Activated T-helper 2 cell treated with anti-CD3 and anti-CD28 coated beads, Interferon-gamma antibody, Interleukin-2, Interleukin-4, amounts not matched to agents 10 μg/mL and 5 μg/mL and 100 μg/mL, durations not matched to agents 14 hours and 24 hours and 36 hours (primary cell): ENCODE measurements at regions of chr9 and their contacts with region 1.

Region 1: GRCh38 chr9:6008169-6008979 is 7.0 kb downstream of the RANBP6 start:
- DNase-seq: peak; percentile 92
- H3K4me3 Mint-ChIP-seq: peak overlapping the region; percentile 74
- H3K27ac Mint-ChIP-seq: peak overlapping the region; percentile 84
- H3K4me1 Mint-ChIP-seq: peaks cover 53% of the 10 kb centered on the region
- H3K27me3 Mint-ChIP-seq: no peaks in the 10 kb centered on the region

Region 2: DNA sequence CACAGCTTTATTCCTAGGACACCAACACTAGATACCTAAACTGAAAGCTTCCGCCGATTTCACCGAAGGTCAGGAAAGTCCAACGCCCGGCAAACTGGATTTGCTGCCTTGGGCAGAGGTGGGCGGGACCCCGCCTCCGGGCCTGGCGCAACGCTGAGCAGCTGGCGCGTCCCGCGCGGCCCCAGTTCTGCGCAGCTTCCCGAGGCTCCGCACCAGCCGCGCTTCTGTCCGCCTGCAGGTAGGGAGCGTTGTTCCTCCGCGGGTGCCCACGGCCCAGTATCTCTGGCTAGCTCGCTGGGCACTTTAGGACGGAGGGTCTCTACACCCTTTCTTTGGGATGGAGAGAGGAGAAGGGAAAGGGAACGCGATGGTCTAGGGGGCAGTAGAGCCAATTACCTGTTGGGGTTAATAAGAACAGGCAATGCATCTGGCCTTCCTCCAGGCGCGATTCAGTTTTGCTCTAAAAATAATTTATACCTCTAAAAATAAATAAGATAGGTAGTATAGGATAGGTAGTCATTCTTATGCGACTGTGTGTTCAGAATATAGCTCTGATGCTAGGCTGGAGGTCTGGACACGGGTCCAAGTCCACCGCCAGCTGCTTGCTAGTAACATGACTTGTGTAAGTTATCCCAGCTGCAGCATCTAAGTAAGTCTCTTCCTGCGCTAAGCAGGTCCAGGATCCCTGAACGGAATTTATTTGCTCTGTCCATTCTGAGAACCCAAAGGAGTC is 557.8 kb before region 1 on chr9 and contains the start of gene CD274:
- intact Hi-C with region 1: loop called (anchors 10 kb)
- DNase-seq: peak; percentile 77
- H3K4me3 Mint-ChIP-seq: peak within 1 kb of the TSS; percentile 97
- H3K27ac Mint-ChIP-seq: peak within 1 kb of the TSS; percentile 92
- H3K4me1 Mint-ChIP-seq: peaks cover 71% of the 10 kb centered on the region
- H3K27me3 Mint-ChIP-seq: no peaks in the 10 kb centered on the region
- total RNA-seq, gene CD274: 36.7 and 40.5 TPM in 2 replicates

Region 3: DNA sequence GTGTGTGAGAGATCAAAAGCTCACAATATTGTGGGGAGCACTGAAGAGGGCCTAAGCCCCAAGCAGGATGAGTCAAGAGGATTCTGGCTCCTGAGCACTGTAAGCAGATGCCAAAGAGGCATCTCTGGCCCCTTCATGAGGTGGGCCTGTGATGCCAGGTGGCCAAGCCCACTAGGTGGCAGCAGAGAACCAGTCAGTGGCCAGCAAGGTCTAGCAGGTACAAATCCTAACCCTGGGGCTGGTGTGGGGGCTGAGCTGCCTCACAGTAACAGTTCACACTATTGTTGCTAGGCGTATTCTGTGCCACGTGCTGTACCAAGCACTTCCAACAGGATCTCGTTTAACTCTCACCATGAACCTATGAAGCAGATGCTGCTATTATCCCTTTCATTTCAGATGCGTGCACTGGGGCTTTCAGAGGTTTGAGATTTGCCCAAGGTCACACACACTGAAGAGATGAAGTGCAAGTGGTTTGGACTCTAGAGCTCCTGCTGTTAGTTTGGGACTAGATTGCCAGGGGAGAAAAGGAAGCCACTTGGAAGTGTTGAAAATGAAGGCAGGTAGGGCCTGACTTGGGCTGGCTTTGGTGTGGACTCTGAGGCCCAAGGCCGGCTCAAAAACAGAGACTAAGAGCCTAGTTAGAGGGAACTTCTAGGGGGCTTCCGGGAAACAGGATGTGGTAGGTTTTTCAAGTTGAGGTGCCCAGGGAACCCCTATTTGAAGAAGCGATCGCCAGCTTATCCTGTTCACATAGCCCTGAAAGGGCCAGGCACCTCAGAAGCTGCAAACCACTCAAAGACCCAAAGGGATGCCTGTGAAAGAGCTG is 122.0 kb before region 1 on chr9:
- intact Hi-C with region 1: loop called (anchors 2 kb)
- DNase-seq: peak; percentile 67
- H3K4me3 Mint-ChIP-seq: no peak overlapping the region
- H3K27ac Mint-ChIP-seq: no peak overlapping the region
- H3K4me1 Mint-ChIP-seq: peaks cover 7% of the 10 kb centered on the region
- H3K27me3 Mint-ChIP-seq: peaks cover 5% of the 10 kb centered on the region

Region 4: GRCh38 chr9:5949103-5949699 is 59.2 kb before region 1 on chr9:
- intact Hi-C with region 1: loop called (anchors 5 kb)
- DNase-seq: peak; percentile 14
- H3K4me3 Mint-ChIP-seq: peak overlapping the region; percentile 21
- H3K27ac Mint-ChIP-seq: no peak overlapping the region
- H3K4me1 Mint-ChIP-seq: peaks cover 31% of the 10 kb centered on the region
- H3K27me3 Mint-ChIP-seq: no peaks in the 10 kb centered on the region

Region 5: DNA sequence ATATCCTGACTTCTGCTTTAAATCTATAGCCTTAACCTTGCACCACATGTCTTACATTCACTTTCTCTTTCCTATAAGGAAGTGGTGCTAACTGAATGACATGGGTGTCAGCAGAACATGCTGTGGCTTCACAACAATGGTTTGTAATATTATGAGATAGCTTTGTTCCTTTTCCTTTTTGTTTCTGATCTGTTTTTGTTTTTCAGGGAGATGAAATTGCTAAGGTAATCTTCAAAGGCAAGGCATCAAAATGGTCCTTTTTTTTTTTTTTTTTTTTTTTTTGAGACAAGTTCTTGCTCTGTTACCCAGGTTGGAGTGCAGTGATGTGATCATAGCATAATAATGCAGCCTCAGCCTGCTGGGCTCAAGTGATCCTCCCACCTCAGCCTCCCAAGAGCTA is 60.6 kb after region 1 on chr9:
- intact Hi-C with region 1: loop called (anchors 2 kb)
- DNase-seq: no peak
- H3K4me3 Mint-ChIP-seq: peak overlapping the region; percentile 31
- H3K27ac Mint-ChIP-seq: peak overlapping the region; percentile 83
- H3K4me1 Mint-ChIP-seq: peaks cover 10% of the 10 kb centered on the region
- H3K27me3 Mint-ChIP-seq: peaks cover 3% of the 10 kb centered on the region

Region 6: DNA sequence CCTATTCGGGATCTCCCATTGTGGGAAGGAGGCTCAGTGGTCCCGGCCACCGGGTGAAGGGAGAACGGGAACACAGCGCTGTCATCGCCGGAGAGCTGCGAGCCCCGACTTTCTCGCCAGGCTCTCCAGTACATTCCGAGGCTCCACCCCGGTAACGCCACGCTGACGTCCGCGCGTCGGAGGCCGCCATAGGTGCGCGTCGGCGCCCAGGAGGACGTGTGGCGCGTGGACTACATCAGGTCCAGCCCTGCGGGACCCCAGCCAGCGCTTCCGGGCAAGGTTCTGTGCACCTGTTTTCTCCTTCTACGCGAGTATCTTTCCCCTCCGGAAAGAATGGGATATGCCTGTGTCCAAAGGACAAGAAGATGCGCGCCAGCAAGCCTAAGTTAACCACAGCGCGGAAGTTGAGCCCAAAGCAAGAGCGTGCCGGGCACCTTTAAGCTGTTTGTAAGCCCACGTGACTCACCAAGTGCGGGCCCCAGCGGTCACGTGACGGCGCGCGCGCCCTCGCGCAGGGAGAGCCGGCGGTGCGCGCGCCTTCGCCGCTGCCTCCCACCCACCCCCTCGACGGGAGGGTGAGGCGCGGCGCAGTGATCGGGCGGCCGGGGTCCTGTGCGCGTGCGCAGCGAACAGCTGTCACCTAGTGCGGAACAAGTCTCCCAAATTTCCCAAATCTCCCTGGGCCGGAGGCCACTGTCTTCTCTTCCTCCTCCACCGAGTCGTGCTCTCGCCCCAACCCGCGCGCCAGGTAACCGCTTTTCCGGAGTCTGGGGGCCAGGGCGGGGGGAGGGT is 749.3 kb after region 1 on chr9 and contains the start of gene KDM4C:
- intact Hi-C with region 1: loop called (anchors 1 kb)
- DNase-seq: peak; percentile 91
- H3K4me3 Mint-ChIP-seq: peak within 1 kb of the TSS; percentile 97
- H3K27ac Mint-ChIP-seq: peak within 1 kb of the TSS; percentile 100
- H3K4me1 Mint-ChIP-seq: peaks cover 16% of the 10 kb centered on the region
- H3K27me3 Mint-ChIP-seq: no peaks in the 10 kb centered on the region
- total RNA-seq, gene KDM4C: 36.0 and 38.4 TPM in 2 replicates